Caco-2 (cell line): ENCODE measurements at regions of chr17 and their contacts with region 1.

Region 1: GRCh38 chr17:39730095-39730921 is at the start of gene MIEN1:
- DNase-seq: peak; percentile 92 to 98
- H3K4me3 ChIP-seq: peak within 1 kb of the TSS; percentile 57
- H3K4me3 Mint-ChIP-seq: peak within 1 kb of the TSS; percentile 84
- H3K27ac Mint-ChIP-seq: peak within 1 kb of the TSS; percentile 91
- H3K4me1 ChIP-seq: peaks cover 11% of the 10 kb centered on the region
- H3K4me1 Mint-ChIP-seq: no peaks in the 10 kb centered on the region
- H3K27me3 ChIP-seq: no peaks in the 10 kb centered on the region
- H3K27me3 Mint-ChIP-seq: no peaks in the 10 kb centered on the region
- CTCF ChIP-seq: peak; percentile 74 to 95
- total RNA-seq, gene MIEN1: 42.9 and 46.3 TPM in 2 replicates

Region 2: GRCh38 chr17:39579318-39580081 is 150.8 kb before region 1 on chr17:
- CTCF ChIA-PET with region 1: no interaction called
- POLR2A ChIA-PET with region 1: no interaction called
- intact Hi-C with region 1: no loop called
- DNase-seq: no peak
- H3K4me3 ChIP-seq: no peak overlapping the region
- H3K4me3 Mint-ChIP-seq: no peak overlapping the region
- H3K27ac Mint-ChIP-seq: no peak overlapping the region
- H3K4me1 ChIP-seq: no peaks in the 10 kb centered on the region
- H3K4me1 Mint-ChIP-seq: no peaks in the 10 kb centered on the region
- H3K27me3 ChIP-seq: no peaks in the 10 kb centered on the region
- H3K27me3 Mint-ChIP-seq: peaks cover 7% of the 10 kb centered on the region
- CTCF ChIP-seq: no peak

Region 3: DNA sequence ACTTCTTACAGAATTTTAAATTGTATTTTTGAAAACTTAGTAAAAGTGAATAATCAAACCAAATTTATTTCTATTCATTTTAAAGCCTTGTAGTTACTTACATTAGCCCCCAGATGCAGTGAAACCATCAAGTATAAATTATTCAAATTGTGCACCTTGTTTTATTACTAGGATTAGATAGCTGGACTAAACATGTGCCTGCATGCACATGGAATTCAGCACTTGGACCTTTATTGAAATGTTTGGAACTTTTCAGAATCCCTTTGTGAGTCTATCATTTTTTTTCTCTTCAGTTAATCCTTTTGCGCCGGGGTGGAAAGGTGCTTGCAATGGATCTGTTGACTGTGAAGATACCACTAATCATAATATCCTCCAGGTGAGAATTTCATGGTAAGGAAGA is 142.4 kb after region 1 on chr17:
- CTCF ChIA-PET with region 1: interaction called, 12 read pairs
- POLR2A ChIA-PET with region 1: no interaction called
- intact Hi-C with region 1: no loop called
- DNase-seq: no peak
- H3K4me3 ChIP-seq: no peak overlapping the region
- H3K4me3 Mint-ChIP-seq: no peak overlapping the region
- H3K27ac Mint-ChIP-seq: no peak overlapping the region
- H3K4me1 ChIP-seq: no peaks in the 10 kb centered on the region
- H3K4me1 Mint-ChIP-seq: no peaks in the 10 kb centered on the region
- H3K27me3 ChIP-seq: no peaks in the 10 kb centered on the region
- H3K27me3 Mint-ChIP-seq: peaks cover 8% of the 10 kb centered on the region
- CTCF ChIP-seq: no peak